Heart right ventricle (tissue), 16 donors: ENCODE measurements at regions of chr20 and their contacts with region 1.

Region 1: DNA sequence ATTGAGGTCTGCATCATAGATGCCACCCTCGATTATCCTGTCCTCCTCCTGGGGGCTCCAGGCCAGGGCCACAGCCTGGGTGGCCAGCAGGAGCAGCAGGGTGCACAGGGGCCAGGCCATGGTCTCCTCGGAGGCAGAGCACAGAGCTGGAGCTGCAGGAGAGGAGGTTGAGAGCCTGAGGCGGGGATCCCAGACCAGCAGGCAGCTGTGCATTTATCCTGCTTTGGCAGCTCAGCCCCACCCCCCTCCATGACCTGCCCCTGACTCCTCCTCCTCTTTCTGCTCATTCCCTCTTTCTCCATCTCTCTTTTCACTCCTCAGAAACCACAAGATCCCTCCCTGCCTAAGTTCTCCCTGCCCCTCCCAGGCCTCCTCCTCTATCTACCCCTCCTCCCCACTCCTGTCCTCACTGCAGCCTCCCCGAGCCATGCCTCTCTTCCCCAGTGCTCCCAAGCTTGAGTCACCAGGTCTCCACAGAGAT is at the start of gene CST2:
- DNase-seq: no peak
- ATAC-seq: peak in 1 of 8 donors; percentile 25
- H3K4me3 ChIP-seq: no peak within 1 kb of the TSS
- H3K27ac ChIP-seq: no peak within 1 kb of the TSS
- H3K4me1 ChIP-seq: peaks cover 0 to 3% (median 0%) of the 10 kb centered on the region in 9 donors
- H3K27me3 ChIP-seq: no peaks in the 10 kb centered on the region
- CTCF ChIP-seq: no peak
- total RNA-seq, gene CST2: 0.75 TPM in 1 of 10 donors, not detected in the others

Region 2: GRCh38 chr20:23776067-23776771 is 50.4 kb before region 1 on chr20:
- intact Hi-C with region 1: loop called in 1 of 10 experiments (anchors 10 kb)
- DNase-seq: no peak
- ATAC-seq: no peak
- H3K4me3 ChIP-seq: no peak overlapping the region
- H3K27ac ChIP-seq: no peak overlapping the region
- H3K4me1 ChIP-seq: no peaks in the 10 kb centered on the region
- H3K27me3 ChIP-seq: peaks cover 0 to 20% (median 0%) of the 10 kb centered on the region in 7 donors
- CTCF ChIP-seq: no peak